Activated CD8-positive, alpha-beta T cell treated with anti-CD3 and anti-CD28 coated beads for 36 hours (primary cell): ENCODE measurements at regions of chr12 and their contacts with region 1.

Region 1: GRCh38 chr12:50038336-50038735 is 13.0 kb upstream of the RACGAP1 start:
- DNase-seq: no peak
- ATAC-seq: no peak
- H3K4me3 Mint-ChIP-seq: no peak overlapping the region
- H3K27ac Mint-ChIP-seq: no peak overlapping the region
- H3K4me1 Mint-ChIP-seq: peaks cover 12% of the 10 kb centered on the region
- H3K27me3 Mint-ChIP-seq: peaks cover 9% of the 10 kb centered on the region
- CTCF ChIP-seq: no peak

Region 2: GRCh38 chr12:50006789-50007436 is 31.4 kb before region 1 on chr12:
- CTCF ChIA-PET with region 1: interaction called, 13 read pairs
- POLR2A ChIA-PET with region 1: no interaction called
- intact Hi-C with region 1: no loop called
- DNase-seq: no peak
- ATAC-seq: no peak
- H3K4me3 Mint-ChIP-seq: no peak overlapping the region
- H3K27ac Mint-ChIP-seq: no peak overlapping the region
- H3K4me1 Mint-ChIP-seq: peaks cover 4% of the 10 kb centered on the region
- H3K27me3 Mint-ChIP-seq: no peaks in the 10 kb centered on the region
- CTCF ChIP-seq: no peak

Region 3: GRCh38 chr12:50016501-50017475 is 21.5 kb before region 1 on chr12:
- CTCF ChIA-PET with region 1: interaction called, 15 read pairs
- POLR2A ChIA-PET with region 1: no interaction called
- intact Hi-C with region 1: no loop called
- DNase-seq: no peak
- ATAC-seq: no peak
- H3K4me3 Mint-ChIP-seq: no peak overlapping the region
- H3K27ac Mint-ChIP-seq: no peak overlapping the region
- H3K4me1 Mint-ChIP-seq: peaks cover 17% of the 10 kb centered on the region
- H3K27me3 Mint-ChIP-seq: no peaks in the 10 kb centered on the region
- CTCF ChIP-seq: no peak

Region 4: GRCh38 chr12:50025187-50026059 is 12.9 kb before region 1 on chr12 and contains the start of gene RACGAP1:
- CTCF ChIA-PET with region 1: interaction called, 35 read pairs
- POLR2A ChIA-PET with region 1: interaction called, 11 read pairs
- intact Hi-C with region 1: no loop called
- DNase-seq: peak; percentile 97
- ATAC-seq: peak; percentile 99
- H3K4me3 Mint-ChIP-seq: peak within 1 kb of the TSS; percentile 93
- H3K27ac Mint-ChIP-seq: peak within 1 kb of the TSS; percentile 97
- H3K4me1 Mint-ChIP-seq: peaks cover 18% of the 10 kb centered on the region
- H3K27me3 Mint-ChIP-seq: no peaks in the 10 kb centered on the region
- CTCF ChIP-seq: no peak
- total RNA-seq, gene RACGAP1: 113 to 117 TPM

Region 5: GRCh38 chr12:50050410-50051098 is 12.2 kb after region 1 on chr12:
- CTCF ChIA-PET with region 1: interaction called, 123 read pairs
- POLR2A ChIA-PET with region 1: interaction called, 9 read pairs
- intact Hi-C with region 1: no loop called
- DNase-seq: no peak
- ATAC-seq: peak; percentile 27
- H3K4me3 Mint-ChIP-seq: no peak overlapping the region
- H3K27ac Mint-ChIP-seq: no peak overlapping the region
- H3K4me1 Mint-ChIP-seq: peaks cover under 1% of the 10 kb centered on the region
- H3K27me3 Mint-ChIP-seq: peaks cover 32% of the 10 kb centered on the region
- CTCF ChIP-seq: no peak

Region 6: GRCh38 chr12:50055831-50056638 is 17.7 kb after region 1 on chr12:
- CTCF ChIA-PET with region 1: interaction called, 299 read pairs
- POLR2A ChIA-PET with region 1: interaction called, 9 read pairs
- intact Hi-C with region 1: loop called (anchors 2 kb)
- DNase-seq: peak; percentile 74
- ATAC-seq: peak; percentile 46
- H3K4me3 Mint-ChIP-seq: peak overlapping the region; percentile 45
- H3K27ac Mint-ChIP-seq: peak overlapping the region; percentile 39
- H3K4me1 Mint-ChIP-seq: peaks cover 41% of the 10 kb centered on the region
- H3K27me3 Mint-ChIP-seq: peaks cover 28% of the 10 kb centered on the region
- CTCF ChIP-seq: peak; percentile 98

Region 7: GRCh38 chr12:50167041-50167828 is 128.9 kb after region 1 on chr12 and contains the start of gene CERS5:
- CTCF ChIA-PET with region 1: interaction called, 10 read pairs
- POLR2A ChIA-PET with region 1: no interaction called
- intact Hi-C with region 1: no loop called
- DNase-seq: peak; percentile 99
- ATAC-seq: peak; percentile 99
- H3K4me3 Mint-ChIP-seq: peak within 1 kb of the TSS; percentile 85
- H3K27ac Mint-ChIP-seq: peak within 1 kb of the TSS; percentile 96
- H3K4me1 Mint-ChIP-seq: peaks cover 25% of the 10 kb centered on the region
- H3K27me3 Mint-ChIP-seq: no peaks in the 10 kb centered on the region
- CTCF ChIP-seq: no peak
- total RNA-seq, gene CERS5: 33.9 to 39.5 TPM

Region 8: DNA sequence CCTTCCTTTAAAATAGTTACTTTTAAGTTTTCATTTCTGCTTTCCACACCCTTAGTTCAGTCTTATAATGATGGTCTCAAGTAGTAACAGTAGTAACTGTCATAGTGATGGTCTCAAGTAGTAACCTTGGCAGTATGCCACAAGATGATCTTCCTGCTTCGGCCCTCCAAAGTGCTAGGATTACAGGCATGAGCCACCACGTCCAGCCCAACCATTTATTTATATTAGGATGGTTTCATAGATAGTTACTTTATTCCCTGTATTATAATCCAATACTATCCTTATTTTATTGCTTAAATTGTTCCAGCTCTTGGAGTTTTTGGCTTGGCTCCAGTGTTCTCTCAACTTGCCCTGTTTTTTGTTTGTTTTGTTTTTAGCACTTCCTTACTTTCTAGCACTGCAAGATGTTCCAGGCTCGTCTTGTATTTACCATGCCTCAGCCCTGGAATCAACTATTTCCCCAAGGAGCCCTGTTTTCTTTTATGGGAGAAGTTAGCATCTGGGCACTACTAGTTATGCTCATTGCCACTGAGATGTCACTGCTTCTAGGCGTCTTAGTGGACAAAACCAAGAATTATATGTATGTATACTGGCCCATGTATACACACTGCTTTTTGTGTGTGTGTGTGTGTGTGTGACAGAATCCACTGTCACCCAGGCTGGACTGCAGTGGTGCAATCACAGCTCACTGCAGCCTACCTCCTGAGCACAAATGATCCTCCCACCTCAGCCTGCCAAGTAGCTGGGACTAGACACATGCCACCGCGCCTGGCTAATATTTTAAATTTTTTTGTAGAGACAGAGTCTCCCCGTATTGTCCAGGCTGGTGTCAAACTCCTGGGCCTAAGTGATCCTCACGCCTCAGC is 219.6 kb after region 1 on chr12:
- CTCF ChIA-PET with region 1: no interaction called
- POLR2A ChIA-PET with region 1: no interaction called
- intact Hi-C with region 1: no loop called
- DNase-seq: no peak
- ATAC-seq: no peak
- H3K4me3 Mint-ChIP-seq: no peak overlapping the region
- H3K27ac Mint-ChIP-seq: no peak overlapping the region
- H3K4me1 Mint-ChIP-seq: peaks cover 16% of the 10 kb centered on the region
- H3K27me3 Mint-ChIP-seq: no peaks in the 10 kb centered on the region
- CTCF ChIP-seq: no peak